WTC11 (cell line): ENCODE measurements at regions of chr1 and their contacts with region 1.

Region 1: DNA sequence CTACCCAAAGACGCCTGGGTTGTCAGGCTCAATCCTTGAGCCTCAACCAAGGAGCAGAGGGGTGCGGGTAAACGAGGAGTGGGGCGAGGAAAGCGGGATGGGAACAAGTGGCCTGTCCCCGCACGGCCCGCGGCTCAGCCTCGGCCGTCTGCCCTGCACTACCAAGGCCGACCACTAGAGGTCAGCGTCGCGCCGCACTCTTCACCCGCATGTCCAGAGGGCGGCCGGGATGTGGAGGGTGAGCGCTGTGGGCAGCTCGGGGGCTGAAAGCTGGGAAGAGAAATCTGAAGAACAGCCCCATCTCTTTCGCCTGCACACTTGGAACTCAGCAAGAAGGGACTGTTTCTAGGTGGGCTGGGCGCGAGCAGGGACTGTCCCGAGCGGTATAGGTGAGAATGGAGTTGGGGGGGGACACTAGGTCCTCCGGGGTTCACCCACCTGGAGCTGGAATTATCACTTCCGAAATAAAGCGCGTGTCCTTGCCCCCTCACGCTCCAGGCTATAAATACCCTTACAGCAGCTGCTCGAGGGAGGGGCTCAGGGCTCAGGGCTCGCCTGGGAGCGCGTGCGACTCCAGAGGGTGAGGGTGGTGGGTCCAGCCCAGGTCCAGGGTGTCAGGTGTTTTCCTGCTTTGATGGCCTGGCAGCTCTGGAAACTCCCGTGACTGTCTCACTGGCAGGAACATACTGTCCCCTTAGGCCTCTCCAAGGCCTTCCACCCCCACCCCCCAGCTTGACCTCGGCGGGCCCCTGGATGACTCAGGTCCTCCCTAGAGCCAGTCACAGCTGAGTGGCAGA is 9.8 kb downstream of the SLC30A2 start:
- DNase-seq: peak; percentile 86
- ATAC-seq: peak; percentile 78
- H3K4me3 Mint-ChIP-seq: peak overlapping the region; percentile 94
- H3K27ac Mint-ChIP-seq: no peak overlapping the region
- H3K4me1 Mint-ChIP-seq: peaks cover 8% of the 10 kb centered on the region
- H3K27me3 Mint-ChIP-seq: peaks cover 54% of the 10 kb centered on the region
- CTCF ChIP-seq: peak; percentile 100

Region 2: DNA sequence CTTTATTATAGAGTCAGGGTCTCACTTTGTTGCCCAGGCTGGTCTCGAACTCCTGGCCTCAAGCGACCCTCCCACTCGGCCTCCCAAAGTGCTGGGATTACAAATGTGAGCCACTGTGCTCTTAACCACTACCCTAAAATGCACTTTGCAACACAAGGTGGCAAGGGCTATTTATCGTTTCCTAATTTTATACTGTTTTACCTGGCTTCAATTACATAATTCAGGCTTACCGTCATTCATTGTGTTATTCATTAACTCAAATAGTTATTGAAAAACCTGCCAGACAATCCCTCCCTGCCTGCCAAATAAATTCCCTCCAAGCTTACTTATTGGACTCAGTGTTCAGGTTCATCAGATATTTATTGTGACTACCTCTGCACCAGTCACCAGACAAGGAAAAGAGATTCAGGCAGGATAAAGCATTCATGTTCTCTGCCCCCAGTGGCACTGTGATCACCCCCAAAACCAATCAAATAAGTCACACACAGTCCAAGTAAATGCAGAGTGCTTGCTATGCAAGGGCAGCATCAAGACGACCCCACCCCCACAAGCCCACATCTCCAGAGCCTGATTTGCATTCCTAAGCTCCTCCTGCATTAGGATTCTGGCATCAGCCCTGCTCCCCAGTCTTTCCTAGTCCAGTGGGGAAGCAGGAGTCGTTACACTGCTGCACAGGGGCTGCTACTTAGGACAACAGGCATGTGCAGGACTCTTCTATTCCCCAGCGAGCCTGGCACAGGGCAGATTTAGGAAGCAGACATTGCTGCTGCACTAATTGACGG is 168.8 kb before region 1 on chr1:
- CTCF ChIA-PET with region 1: no interaction called
- POLR2A ChIA-PET with region 1: no interaction called
- DNase-seq: peak; percentile 44
- ATAC-seq: peak; percentile 67
- H3K4me3 Mint-ChIP-seq: no peak overlapping the region
- H3K27ac Mint-ChIP-seq: peak overlapping the region; percentile 71
- H3K4me1 Mint-ChIP-seq: peaks cover 23% of the 10 kb centered on the region
- H3K27me3 Mint-ChIP-seq: no peaks in the 10 kb centered on the region
- CTCF ChIP-seq: no peak

Region 3: DNA sequence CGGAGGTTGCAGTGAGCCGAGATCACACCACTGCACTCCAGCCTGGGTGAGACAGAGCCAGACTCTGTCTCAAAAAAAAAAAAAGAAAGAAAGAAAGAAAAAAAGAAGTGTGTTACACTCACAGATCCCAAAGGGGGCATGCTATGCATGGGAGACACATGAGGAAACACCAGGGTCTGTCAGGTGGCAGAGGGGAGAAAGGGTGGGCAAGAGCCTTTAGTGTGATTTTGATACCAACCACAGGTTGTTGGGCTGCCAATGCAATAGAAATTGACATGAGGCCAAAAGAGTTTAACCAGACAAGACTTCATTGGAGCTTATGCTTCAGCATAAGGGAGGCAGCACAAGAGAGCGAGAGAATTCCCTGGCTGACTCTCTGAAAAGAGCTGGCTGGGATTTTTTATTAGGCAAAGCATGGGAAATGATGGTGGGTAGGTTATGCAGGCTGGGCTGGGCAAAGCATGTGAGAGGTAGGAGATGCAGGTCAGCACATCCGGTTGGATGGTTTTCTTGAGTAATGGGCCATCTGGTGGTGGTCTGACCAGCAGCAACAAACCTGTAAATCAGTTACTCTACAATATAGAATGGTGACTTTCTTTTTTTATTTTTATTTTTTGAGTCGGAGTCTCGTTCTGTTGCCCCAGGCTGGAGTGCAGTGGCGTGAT is 26.2 kb before region 1 on chr1:
- CTCF ChIA-PET with region 1: interaction called, 22 read pairs
- POLR2A ChIA-PET with region 1: no interaction called
- DNase-seq: peak; percentile 45
- ATAC-seq: peak; percentile 72
- H3K4me3 Mint-ChIP-seq: no peak overlapping the region
- H3K27ac Mint-ChIP-seq: no peak overlapping the region
- H3K4me1 Mint-ChIP-seq: peaks cover 22% of the 10 kb centered on the region
- H3K27me3 Mint-ChIP-seq: no peaks in the 10 kb centered on the region; the same call in 1 of the 2 replicates
- CTCF ChIP-seq: no peak

Region 4: GRCh38 chr1:26053718-26054560 is 17.8 kb after region 1 on chr1:
- CTCF ChIA-PET with region 1: interaction called, 27 read pairs
- POLR2A ChIA-PET with region 1: no interaction called
- DNase-seq: peak; percentile 32
- ATAC-seq: peak; percentile 61; the same call in 1 of the 2 replicates
- H3K4me3 Mint-ChIP-seq: no peak overlapping the region
- H3K27ac Mint-ChIP-seq: no peak overlapping the region
- H3K4me1 Mint-ChIP-seq: no peaks in the 10 kb centered on the region
- H3K27me3 Mint-ChIP-seq: peaks cover 42% of the 10 kb centered on the region
- CTCF ChIP-seq: no peak

Region 5: DNA sequence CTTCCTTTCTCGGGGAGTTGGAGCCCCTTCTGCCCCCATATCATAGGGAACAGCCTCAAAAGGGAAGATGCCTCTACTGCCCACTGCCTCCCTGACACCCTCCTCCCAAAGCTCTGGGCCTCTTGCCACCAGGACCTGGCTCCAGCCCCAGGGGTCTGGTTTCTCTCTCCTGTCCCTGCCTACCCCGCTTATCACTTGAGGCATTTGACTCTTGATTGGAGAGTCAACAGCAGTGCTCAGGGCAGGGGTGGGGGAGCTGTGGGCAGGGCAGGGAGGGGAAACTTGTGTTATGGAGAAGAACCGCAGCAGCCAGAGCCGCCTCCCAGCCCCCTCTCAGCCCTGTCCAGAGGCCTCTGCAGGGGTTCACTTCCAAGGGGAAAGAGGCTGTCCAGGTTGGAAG is 30.7 kb after region 1 on chr1:
- CTCF ChIA-PET with region 1: interaction called, 13 read pairs
- POLR2A ChIA-PET with region 1: no interaction called
- DNase-seq: no peak
- ATAC-seq: peak; percentile 20; the same call in 1 of the 2 replicates
- H3K4me3 Mint-ChIP-seq: no peak overlapping the region
- H3K27ac Mint-ChIP-seq: no peak overlapping the region
- H3K4me1 Mint-ChIP-seq: peaks cover 8% of the 10 kb centered on the region; the same call in 1 of the 2 replicates
- H3K27me3 Mint-ChIP-seq: no peaks in the 10 kb centered on the region
- CTCF ChIP-seq: no peak

Region 6: GRCh38 chr1:26161415-26162219 is 125.5 kb after region 1 on chr1:
- CTCF ChIA-PET with region 1: interaction called, 15 read pairs
- POLR2A ChIA-PET with region 1: no interaction called
- DNase-seq: peak; percentile 64
- ATAC-seq: peak; percentile 4; the same call in 1 of the 2 replicates
- H3K4me3 Mint-ChIP-seq: peak overlapping the region; percentile 74
- H3K27ac Mint-ChIP-seq: no peak overlapping the region
- H3K4me1 Mint-ChIP-seq: peaks cover 56% of the 10 kb centered on the region
- H3K27me3 Mint-ChIP-seq: peaks cover 92% of the 10 kb centered on the region
- CTCF ChIP-seq: no peak

Region 7: GRCh38 chr1:26233903-26234643 is 197.9 kb after region 1 on chr1 and contains the start of gene CEP85:
- CTCF ChIA-PET with region 1: interaction called, 17 read pairs
- POLR2A ChIA-PET with region 1: interaction called, 4 read pairs
- DNase-seq: peak; percentile 99
- ATAC-seq: peak; percentile 96
- H3K4me3 Mint-ChIP-seq: peak within 1 kb of the TSS; percentile 99
- H3K27ac Mint-ChIP-seq: peak within 1 kb of the TSS; percentile 87
- H3K4me1 Mint-ChIP-seq: peaks cover 25% of the 10 kb centered on the region
- H3K27me3 Mint-ChIP-seq: peaks cover 4% of the 10 kb centered on the region
- CTCF ChIP-seq: peak; percentile 49; the same call in 1 of the 2 replicates
- total RNA-seq, gene CEP85: 32.0 to 40.8 TPM (median 35.3 TPM) in 3 replicates